ENCODE measurements at regions of chr9 and their contacts with region 1.

Region 1: DNA sequence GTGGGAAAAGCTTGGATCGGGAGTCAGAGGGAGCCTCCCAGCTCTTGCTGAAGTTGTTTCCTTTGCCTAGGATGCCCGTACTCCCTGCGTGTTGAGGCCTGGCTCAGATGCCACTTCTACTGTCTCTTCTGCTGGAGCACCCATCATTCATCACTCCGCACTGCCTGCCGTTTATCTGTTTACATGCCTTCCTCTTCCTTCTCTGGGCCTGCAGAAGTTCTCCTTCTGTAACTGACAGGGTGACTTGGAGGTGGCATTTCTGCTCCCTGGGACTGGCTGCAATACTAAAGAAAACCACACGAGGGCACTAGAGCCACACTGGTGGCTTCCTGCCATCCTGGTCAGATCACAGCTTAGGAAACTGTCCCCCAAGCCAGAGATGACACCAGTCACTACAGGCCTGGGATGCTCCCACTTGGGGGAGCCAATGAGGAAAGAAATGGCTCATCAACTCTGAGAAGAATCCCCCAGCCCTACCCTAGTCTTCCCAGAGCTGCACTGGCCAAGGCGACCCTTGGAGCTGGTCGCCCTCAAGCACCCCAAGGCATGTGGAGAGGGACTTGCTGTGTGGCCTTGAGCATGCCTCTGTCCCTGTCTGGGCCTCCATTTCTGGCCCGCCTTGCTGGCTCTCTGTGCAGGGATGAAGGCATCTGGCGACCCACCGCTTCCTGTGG is 9.7 kb upstream of the SLC25A51 start:
- DNase-seq: peak; percentile 81 to 88
- ATAC-seq: peak; percentile 88
- H3K4me3 ChIP-seq: no peak overlapping the region
- H3K27ac ChIP-seq: no peak overlapping the region
- H3K4me1 ChIP-seq: no peaks in the 10 kb centered on the region
- H3K27me3 ChIP-seq: no peaks in the 10 kb centered on the region

Region 2: DNA sequence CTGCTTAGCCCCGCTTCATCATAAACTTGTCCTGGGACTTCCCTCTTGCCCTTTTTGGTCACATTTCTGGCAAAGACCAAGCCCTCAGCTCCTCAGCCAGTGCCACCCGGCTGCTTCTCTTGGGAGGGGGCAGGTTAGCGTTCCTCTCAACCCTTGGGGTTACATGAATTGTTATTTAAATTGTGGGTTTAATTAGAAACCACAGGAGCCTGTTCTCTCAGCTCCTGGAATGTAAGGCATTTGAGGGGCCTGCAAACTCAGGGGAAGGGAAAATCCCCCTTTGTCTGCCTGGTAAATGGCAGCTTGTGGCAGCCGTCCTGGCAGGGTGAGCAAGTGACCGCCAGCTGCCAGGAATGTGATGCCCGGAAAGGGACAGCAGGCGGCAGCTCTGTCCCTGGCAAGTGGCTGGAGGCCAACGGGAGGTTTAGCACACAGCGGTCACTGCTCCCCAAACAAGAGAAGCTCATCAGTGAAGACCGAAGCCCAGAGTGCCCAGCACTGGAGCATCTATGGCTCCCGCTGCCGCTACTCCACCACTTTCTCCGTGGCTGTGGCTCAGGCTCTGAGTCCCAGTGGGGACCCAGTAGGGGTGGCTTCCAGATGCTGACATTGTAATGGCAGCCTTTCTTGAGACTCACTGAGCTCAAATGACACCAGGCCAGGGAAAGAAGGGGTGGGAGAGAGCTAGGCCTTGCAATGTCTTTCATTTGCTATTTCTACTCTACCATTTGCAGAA is 103.7 kb after region 1 on chr9:
- intact Hi-C with region 1: loop called (anchors 5 to 10 kb)
- DNase-seq: peak; percentile 70 to 85
- ATAC-seq: peak; percentile 68
- H3K4me3 ChIP-seq: no peak overlapping the region
- H3K27ac ChIP-seq: peak overlapping the region in 1 of 2 donors; percentile 20
- H3K4me1 ChIP-seq: peaks cover 2 to 11% of the 10 kb centered on the region in 2 donors
- H3K27me3 ChIP-seq: no peaks in the 10 kb centered on the region

Region 3: GRCh38 chr9:38074441-38074961 is 160.9 kb after region 1 on chr9:
- intact Hi-C with region 1: loop called in 1 of 2 experiments (anchors 5 kb)
- DNase-seq: no peak
- ATAC-seq: no peak
- H3K4me3 ChIP-seq: no peak overlapping the region
- H3K27ac ChIP-seq: no peak overlapping the region
- H3K4me1 ChIP-seq: peaks cover 0 to 2% of the 10 kb centered on the region in 2 donors
- H3K27me3 ChIP-seq: no peaks in the 10 kb centered on the region

Region 4: GRCh38 chr9:38088006-38088925 is 174.6 kb after region 1 on chr9:
- intact Hi-C with region 1: loop called (anchors 5 kb)
- DNase-seq: peak; percentile 79 to 93
- ATAC-seq: peak; percentile 85
- H3K4me3 ChIP-seq: no peak overlapping the region
- H3K27ac ChIP-seq: no peak overlapping the region
- H3K4me1 ChIP-seq: no peaks in the 10 kb centered on the region
- H3K27me3 ChIP-seq: no peaks in the 10 kb centered on the region

Region 5: DNA sequence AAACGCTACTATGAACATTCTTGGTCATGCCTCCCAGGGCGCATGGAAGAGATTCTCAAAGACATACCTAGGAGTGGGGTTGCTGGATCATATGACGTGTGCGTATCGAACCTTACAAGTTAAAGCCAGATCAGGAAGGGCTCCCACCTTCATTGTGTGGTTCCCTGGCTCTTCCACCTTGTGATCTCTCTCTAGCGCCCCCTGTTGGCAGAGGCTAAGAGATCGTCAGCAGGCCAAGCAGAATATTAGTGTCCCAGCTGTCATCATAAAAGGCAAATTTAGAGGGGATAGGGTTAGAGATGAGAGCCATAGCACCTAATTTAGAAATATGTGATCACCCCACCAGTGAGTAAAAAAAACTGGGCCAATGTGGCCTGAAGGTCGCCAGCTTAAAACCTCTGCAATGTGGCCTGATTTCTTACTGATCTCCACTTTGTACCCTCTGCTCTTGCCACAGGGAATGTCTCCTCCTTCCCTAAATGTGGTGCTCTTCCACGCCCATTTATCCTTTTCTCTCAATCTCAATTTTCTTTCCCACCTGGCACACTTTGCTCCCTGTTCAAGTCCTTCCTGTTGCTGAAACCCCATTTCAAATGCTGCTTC is 247.1 kb after region 1 on chr9:
- intact Hi-C with region 1: loop called (anchors 1 to 5 kb)
- DNase-seq: peak in 1 of 2 donors; percentile 70
- ATAC-seq: peak; percentile 56
- H3K4me3 ChIP-seq: no peak overlapping the region
- H3K27ac ChIP-seq: no peak overlapping the region
- H3K4me1 ChIP-seq: no peaks in the 10 kb centered on the region
- H3K27me3 ChIP-seq: no peaks in the 10 kb centered on the region

Region 6: GRCh38 chr9:38362852-38363593 is 449.4 kb after region 1 on chr9:
- intact Hi-C with region 1: loop called (anchors 5 kb)
- DNase-seq: peak in 1 of 2 donors; percentile 73
- ATAC-seq: peak; percentile 80
- H3K4me3 ChIP-seq: no peak overlapping the region
- H3K27ac ChIP-seq: no peak overlapping the region
- H3K4me1 ChIP-seq: no peaks in the 10 kb centered on the region
- H3K27me3 ChIP-seq: no peaks in the 10 kb centered on the region

Region 7: GRCh38 chr9:38404314-38404713 is 490.7 kb after region 1 on chr9:
- intact Hi-C with region 1: loop called (anchors 5 to 10 kb)
- DNase-seq: no peak
- ATAC-seq: no peak
- H3K4me3 ChIP-seq: no peak overlapping the region
- H3K27ac ChIP-seq: no peak overlapping the region
- H3K4me1 ChIP-seq: no peaks in the 10 kb centered on the region
- H3K27me3 ChIP-seq: no peaks in the 10 kb centered on the region

Measured in aorta (tissue), 5 donors.